ENCODE measurements at regions of chr20 and their contacts with region 1.

Region 1: GRCh38 chr20:63864847-63865640 is at the start of gene TPD52L2:
- DNase-seq: peak; percentile 93
- ATAC-seq: peak; percentile 82
- H3K4me3 Mint-ChIP-seq: peak within 1 kb of the TSS; percentile 99
- H3K27ac Mint-ChIP-seq: peak within 1 kb of the TSS; percentile 99
- H3K4me1 Mint-ChIP-seq: peaks cover 33% of the 10 kb centered on the region
- H3K27me3 Mint-ChIP-seq: no peaks in the 10 kb centered on the region
- CTCF ChIP-seq: no peak
- total RNA-seq, gene TPD52L2: 36.7 and 38.8 TPM in 2 replicates

Region 2: GRCh38 chr20:62776692-62777527 is 1088.1 kb before region 1 on chr20:
- CTCF ChIA-PET with region 1: no interaction called
- POLR2A ChIA-PET with region 1: no interaction called
- intact Hi-C with region 1: no loop called
- DNase-seq: no peak
- ATAC-seq: peak; percentile 77
- H3K4me3 Mint-ChIP-seq: peak overlapping the region; percentile 38
- H3K27ac Mint-ChIP-seq: peak overlapping the region; percentile 76
- H3K4me1 Mint-ChIP-seq: peaks cover 25% of the 10 kb centered on the region
- H3K27me3 Mint-ChIP-seq: no peaks in the 10 kb centered on the region
- CTCF ChIP-seq: no peak

Region 3: GRCh38 chr20:63495741-63496595 is 369.1 kb before region 1 on chr20:
- CTCF ChIA-PET with region 1: interaction called, 9 read pairs
- POLR2A ChIA-PET with region 1: no interaction called
- intact Hi-C with region 1: loop called (anchors 1 kb)
- DNase-seq: peak; percentile 73
- ATAC-seq: peak; percentile 74
- H3K4me3 Mint-ChIP-seq: peak overlapping the region; percentile 59
- H3K27ac Mint-ChIP-seq: no peak overlapping the region
- H3K4me1 Mint-ChIP-seq: peaks cover 4% of the 10 kb centered on the region
- H3K27me3 Mint-ChIP-seq: peaks cover 9% of the 10 kb centered on the region
- CTCF ChIP-seq: peak; percentile 58

Region 4: GRCh38 chr20:63641792-63642544 is 223.1 kb before region 1 on chr20:
- CTCF ChIA-PET with region 1: interaction called, 9 read pairs
- POLR2A ChIA-PET with region 1: interaction called, 9 read pairs
- intact Hi-C with region 1: loop called (anchors 1 kb)
- DNase-seq: peak; percentile 92
- ATAC-seq: peak; percentile 76
- H3K4me3 Mint-ChIP-seq: peak overlapping the region; percentile 78
- H3K27ac Mint-ChIP-seq: peak overlapping the region; percentile 71
- H3K4me1 Mint-ChIP-seq: peaks cover 35% of the 10 kb centered on the region
- H3K27me3 Mint-ChIP-seq: no peaks in the 10 kb centered on the region
- CTCF ChIP-seq: no peak

Region 5: GRCh38 chr20:63739130-63740069 is 125.6 kb before region 1 on chr20 and contains the start of gene SLC2A4RG:
- CTCF ChIA-PET with region 1: interaction called, 4 read pairs
- POLR2A ChIA-PET with region 1: interaction called, 4 read pairs
- intact Hi-C with region 1: loop called (anchors 1 kb)
- DNase-seq: peak; percentile 73
- ATAC-seq: peak; percentile 65
- H3K4me3 Mint-ChIP-seq: peak within 1 kb of the TSS; percentile 48
- H3K27ac Mint-ChIP-seq: no peak within 1 kb of the TSS
- H3K4me1 Mint-ChIP-seq: peaks cover 28% of the 10 kb centered on the region
- H3K27me3 Mint-ChIP-seq: no peaks in the 10 kb centered on the region
- CTCF ChIP-seq: no peak
- total RNA-seq, gene SLC2A4RG: 20.9 and 28.1 TPM in 2 replicates

Region 6: GRCh38 chr20:63829932-63830835 is 34.9 kb before region 1 on chr20:
- CTCF ChIA-PET with region 1: no interaction called
- POLR2A ChIA-PET with region 1: no interaction called
- intact Hi-C with region 1: loop called (anchors 2 kb)
- DNase-seq: no peak
- ATAC-seq: peak; percentile 12
- H3K4me3 Mint-ChIP-seq: peak overlapping the region; percentile 90
- H3K27ac Mint-ChIP-seq: peak overlapping the region; percentile 64
- H3K4me1 Mint-ChIP-seq: peaks cover 12% of the 10 kb centered on the region
- H3K27me3 Mint-ChIP-seq: peaks cover 35% of the 10 kb centered on the region
- CTCF ChIP-seq: no peak

Region 7: GRCh38 chr20:63884506-63885263 is 19.6 kb after region 1 on chr20:
- CTCF ChIA-PET with region 1: no interaction called
- POLR2A ChIA-PET with region 1: no interaction called
- intact Hi-C with region 1: no loop called
- DNase-seq: no peak
- ATAC-seq: no peak
- H3K4me3 Mint-ChIP-seq: no peak overlapping the region
- H3K27ac Mint-ChIP-seq: no peak overlapping the region
- H3K4me1 Mint-ChIP-seq: no peaks in the 10 kb centered on the region
- H3K27me3 Mint-ChIP-seq: no peaks in the 10 kb centered on the region
- CTCF ChIP-seq: no peak

Region 8: GRCh38 chr20:63973636-63974402 is 108.8 kb after region 1 on chr20:
- CTCF ChIA-PET with region 1: interaction called, 11 read pairs
- POLR2A ChIA-PET with region 1: interaction called, 7 read pairs
- intact Hi-C with region 1: loop called (anchors 1 kb)
- DNase-seq: peak; percentile 87
- ATAC-seq: peak; percentile 66
- H3K4me3 Mint-ChIP-seq: peak overlapping the region; percentile 8
- H3K27ac Mint-ChIP-seq: no peak overlapping the region
- H3K4me1 Mint-ChIP-seq: peaks cover 28% of the 10 kb centered on the region
- H3K27me3 Mint-ChIP-seq: no peaks in the 10 kb centered on the region
- CTCF ChIP-seq: peak; percentile 72

Region 9: DNA sequence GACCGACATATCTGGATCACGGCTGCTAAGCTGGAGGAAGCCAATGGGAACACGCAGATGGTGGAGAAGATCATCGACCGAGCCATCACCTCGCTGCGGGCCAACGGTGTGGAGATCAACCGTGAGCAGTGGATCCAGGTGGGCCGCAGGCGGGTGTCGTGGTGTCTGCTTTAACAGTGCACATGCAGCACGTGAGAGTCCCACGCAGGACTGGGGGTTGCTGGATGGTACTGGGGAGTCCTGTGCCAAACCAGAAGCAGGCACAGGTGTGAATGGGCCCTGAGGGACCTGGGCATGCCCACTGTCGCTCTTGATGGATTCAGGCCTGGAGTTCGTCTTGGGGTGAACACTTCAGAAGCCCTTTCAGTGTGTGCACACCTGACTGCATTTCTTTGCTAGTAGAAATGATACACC is 146.3 kb after region 1 on chr20:
- CTCF ChIA-PET with region 1: no interaction called
- POLR2A ChIA-PET with region 1: no interaction called
- intact Hi-C with region 1: no loop called
- DNase-seq: no peak
- ATAC-seq: no peak
- H3K4me3 Mint-ChIP-seq: no peak overlapping the region
- H3K27ac Mint-ChIP-seq: no peak overlapping the region
- H3K4me1 Mint-ChIP-seq: peaks cover 3% of the 10 kb centered on the region
- H3K27me3 Mint-ChIP-seq: no peaks in the 10 kb centered on the region
- CTCF ChIP-seq: no peak

Region 10: GRCh38 chr20:64035066-64035932 is 170.3 kb after region 1 on chr20:
- CTCF ChIA-PET with region 1: no interaction called
- POLR2A ChIA-PET with region 1: no interaction called
- intact Hi-C with region 1: no loop called
- DNase-seq: no peak
- ATAC-seq: no peak
- H3K4me3 Mint-ChIP-seq: no peak overlapping the region
- H3K27ac Mint-ChIP-seq: peak overlapping the region; percentile 30
- H3K4me1 Mint-ChIP-seq: peaks cover 12% of the 10 kb centered on the region
- H3K27me3 Mint-ChIP-seq: peaks cover 8% of the 10 kb centered on the region
- CTCF ChIP-seq: no peak

Measured in activated B cell treated with CpG ODN at 0.5 μM for 24 hours (primary cell).